GM10248 (cell line): ENCODE measurements at regions of chr7 and their contacts with region 1.

Region 1: DNA sequence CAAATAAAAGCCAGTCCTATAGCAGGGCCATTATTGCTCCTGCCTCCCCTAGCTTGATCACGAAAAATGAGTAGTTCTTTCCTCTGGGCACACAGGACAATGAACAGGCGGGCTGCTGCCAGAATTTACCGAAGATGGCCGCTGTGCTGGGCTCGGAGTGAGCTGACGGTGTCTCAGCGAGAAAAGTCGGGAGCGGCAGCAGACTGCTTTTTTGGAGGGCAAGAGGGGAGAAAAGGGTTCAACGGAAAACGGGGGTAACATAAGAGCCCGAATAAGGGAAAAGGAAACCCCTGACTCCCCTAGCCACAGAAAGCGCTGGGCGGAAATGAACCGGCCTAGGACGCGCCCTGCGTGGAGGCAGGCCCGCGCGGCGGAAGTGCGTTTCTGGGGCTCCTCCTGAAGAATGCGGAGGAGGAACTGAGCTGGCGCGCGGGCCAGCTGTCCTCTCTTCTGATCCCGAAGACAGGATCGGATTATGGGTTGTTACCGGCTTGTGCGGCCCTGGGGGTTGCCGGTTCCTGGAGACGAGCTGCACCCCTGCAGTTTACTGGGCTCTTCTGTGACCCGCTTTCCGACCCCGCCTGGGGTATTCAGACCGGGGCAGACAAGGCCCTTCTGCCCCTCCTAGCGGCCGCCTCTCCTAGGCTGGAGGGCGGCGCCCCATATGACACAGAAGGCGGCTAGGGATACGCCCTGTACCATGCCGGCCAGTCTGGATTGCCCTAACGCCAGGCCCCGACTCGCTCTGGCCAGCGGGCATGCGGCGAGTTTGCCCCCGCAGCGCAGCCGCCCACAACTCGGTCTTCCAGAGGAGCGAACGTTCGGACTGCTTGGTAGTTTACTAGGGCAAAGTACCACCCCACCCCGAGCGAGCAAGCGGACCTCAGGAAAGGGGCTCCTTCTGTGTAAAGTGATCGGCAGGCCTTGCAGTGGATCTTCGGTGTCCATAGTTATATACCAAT is 30.1 kb upstream of the KMT2E start:
- DNase-seq: peak; percentile 85
- CTCF ChIP-seq: peak; percentile 56

Region 2: DNA sequence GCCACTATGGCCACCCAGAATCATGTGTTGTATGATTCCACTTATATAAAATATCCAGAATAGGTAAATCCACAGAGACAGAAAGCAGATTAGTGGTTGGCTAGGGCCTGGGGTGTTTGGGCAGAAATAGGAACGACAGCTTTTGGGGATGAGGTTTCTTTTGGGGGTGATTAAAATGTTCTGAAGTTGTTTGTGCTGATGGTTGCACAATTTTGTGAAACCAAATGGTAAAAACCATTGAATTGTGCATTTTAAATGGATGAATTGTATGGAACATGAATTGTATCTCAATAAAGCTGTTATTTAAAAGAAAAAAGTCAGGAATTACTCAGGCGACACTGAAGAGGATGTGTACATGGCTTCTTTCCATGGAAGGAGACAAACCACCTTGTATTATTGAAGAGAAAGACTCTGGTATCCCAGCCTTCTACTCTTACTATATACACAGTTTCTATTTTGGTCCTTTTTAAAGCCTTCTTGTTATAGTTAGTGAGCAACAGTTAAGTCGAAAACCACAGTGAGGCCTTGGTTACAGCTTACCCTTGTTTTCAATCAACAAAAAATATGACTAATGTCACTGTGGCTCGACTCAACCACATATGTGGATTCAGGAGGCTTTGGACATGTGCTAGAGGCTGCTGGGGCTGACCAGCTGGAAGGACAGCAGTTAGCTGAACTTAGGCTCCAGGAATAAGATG is 27.0 kb before region 1 on chr7:
- CTCF ChIA-PET with region 1: interaction called, 30 read pairs
- POLR2A ChIA-PET with region 1: interaction called, 3 read pairs
- DNase-seq: peak; percentile 61
- CTCF ChIP-seq: no peak

Region 3: DNA sequence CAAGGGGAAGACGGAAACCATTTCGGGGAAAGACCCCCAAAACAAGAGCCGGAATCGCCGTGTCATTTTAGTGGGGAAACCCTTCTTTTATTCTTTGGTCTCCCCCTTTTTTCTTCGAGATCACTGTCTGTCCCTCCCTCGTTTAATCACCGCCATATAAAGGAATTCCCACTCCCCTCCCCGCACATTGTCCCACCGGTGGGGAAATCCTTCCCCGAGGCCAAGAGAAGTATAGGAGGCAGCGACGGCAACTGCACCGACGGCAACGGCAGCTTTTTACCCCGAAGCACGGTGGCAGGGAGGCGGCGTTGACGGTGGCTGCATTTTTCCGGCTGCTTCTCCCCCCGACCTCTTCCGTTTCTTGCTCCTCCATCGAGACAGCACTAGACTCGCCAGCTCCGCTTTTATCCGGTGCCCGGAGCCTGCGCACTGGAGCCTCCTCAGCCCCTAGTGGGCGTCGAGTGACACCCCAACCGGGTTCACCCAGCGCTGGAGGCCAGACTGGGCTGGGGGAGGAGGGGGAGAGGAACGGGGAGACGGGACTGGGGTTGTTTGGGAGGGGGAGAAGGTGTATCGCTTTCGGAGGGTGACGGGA is 29.5 kb after region 1 on chr7:
- CTCF ChIA-PET with region 1: interaction called, 173 read pairs
- POLR2A ChIA-PET with region 1: interaction called, 40 read pairs
- DNase-seq: peak; percentile 85
- CTCF ChIP-seq: peak; percentile 25

Region 4: DNA sequence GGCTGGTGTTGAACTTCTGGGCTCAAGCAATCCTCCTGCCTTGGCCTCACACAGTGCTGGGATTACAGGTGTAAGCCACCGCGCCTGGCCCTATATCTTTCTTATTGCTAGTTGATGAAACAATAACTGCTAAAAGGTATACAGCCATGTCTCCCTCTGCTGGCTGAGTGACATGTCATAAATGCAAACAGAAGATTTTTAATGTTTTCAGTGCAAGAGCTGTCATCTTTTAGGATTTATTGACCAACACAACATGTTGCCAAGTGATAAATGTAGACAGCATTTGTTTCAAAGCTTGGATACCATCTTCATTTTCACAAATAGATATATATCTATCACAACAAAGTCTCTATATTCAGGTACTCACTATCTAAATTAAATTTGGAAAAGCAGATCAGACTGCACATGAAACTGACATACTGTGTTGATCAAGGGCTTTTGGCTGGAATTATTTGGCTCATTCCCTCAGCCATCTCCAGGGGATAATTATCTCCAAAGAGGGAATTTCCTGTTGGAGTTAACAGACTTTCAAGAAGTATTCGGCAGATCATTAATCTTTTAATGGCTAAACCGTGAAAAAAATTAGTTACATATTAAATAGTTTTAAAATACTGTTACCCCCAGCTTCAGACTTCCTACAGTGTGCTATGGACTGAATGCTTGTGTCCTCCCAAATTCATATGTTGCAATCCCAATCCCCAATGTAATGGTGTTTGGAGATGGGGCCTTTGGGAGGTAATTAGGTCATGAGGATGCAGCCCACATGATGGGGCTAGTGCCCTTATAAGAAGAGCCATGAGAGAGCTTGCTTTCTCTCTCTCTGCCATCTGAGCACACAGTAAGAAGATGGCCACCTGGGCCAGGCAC is 446.1 kb after region 1 on chr7:
- CTCF ChIA-PET with region 1: interaction called, 12 read pairs
- POLR2A ChIA-PET with region 1: no interaction called
- DNase-seq: peak; percentile 52
- CTCF ChIP-seq: peak; percentile 68